Mucosa of descending colon (tissue), 3 donors: ENCODE measurements at regions of chrX and their contacts with region 1.

Region 1: GRCh38 chrX:24498975-24499374 is 33.9 kb downstream of the PDK3 start:
- DNase-seq: no peak
- ATAC-seq: peak; percentile 37
- H3K4me3 ChIP-seq: no peak overlapping the region
- H3K4me1 ChIP-seq: no peaks in the 10 kb centered on the region
- CTCF ChIP-seq: no peak

Region 2: DNA sequence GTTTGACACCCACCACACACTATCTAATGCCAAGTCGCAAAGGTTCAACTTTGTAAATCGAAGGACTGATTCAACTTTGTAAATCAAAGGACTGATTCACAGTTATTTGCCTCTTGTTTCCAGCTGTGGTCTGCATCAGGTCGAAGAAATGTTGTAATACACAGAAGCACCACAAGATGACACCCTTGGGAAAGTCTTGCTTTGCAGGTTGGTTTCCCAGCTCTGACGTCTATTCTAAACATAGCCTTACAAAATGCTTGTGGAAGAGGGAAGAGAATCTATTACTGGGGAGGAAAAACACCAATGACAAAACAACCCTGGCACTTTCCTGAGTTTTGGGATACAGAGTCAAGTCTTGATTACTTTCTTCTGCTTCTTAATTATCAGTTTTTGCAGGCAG is 103.2 kb before region 1 on chrX:
- intact Hi-C with region 1: loop called (anchors 5 to 10 kb)
- DNase-seq: peak in 1 of 3 donors; percentile 75
- ATAC-seq: peak; percentile 90
- H3K4me3 ChIP-seq: no peak overlapping the region
- H3K4me1 ChIP-seq: no peaks in the 10 kb centered on the region
- CTCF ChIP-seq: peak; percentile 20